ENCODE measurements at regions of chr13 and their contacts with region 1.

Region 1: DNA sequence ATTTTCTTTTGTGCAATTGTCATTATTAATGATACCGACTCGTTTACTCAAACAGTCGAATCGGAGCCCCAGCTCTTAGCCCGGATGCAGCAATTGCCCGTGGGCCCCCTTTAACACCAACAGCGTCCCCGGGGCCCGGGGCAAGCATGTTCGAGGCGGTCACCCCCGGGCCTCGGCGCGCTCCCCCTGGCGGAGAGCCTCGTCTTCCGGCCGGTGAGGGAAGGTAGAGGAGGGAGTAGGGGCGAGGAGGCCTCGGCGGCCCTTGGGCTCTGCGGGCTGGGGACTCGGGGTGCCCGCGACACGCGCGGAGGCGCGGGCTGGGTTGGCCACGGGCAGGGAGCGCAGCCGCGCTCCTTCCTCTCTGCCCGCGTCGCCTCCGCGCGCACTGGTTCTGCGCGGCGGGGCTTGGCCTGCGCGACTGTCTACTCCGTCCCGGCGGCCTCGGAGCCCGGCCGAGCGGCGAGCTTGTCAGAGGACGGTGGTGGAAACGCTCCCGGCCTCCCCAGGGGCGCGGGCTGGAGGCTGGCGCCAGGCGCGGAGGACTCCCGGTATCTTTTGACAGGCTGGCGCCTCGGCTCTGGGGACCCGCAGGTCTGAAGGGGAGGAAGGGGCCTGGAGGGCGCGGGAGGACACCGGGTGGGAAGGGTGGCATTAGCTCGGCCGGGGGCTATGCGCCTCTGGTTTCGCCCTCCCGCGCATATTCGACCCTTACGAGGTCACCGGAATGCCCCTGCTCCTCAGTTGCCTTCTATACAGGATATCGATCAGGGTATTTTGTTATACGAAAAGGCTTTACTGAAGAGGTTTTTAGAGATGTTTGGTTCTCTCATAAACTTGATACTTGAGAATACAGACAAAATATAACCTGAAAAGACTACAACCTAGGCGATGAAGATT is 1.5 kb downstream of the BIVM start:
- DNase-seq: peak; percentile 88 to 93 (median 93)
- H3K4me3 ChIP-seq: peak overlapping the region; percentile 67 to 97 (median 85)
- H3K27ac ChIP-seq: peak overlapping the region; percentile 61 to 85
- H3K4me1 ChIP-seq: peaks cover 12 to 47% (median 30%) of the 10 kb centered on the region in 4 experiments
- H3K27me3 ChIP-seq: no peaks in the 10 kb centered on the region

Region 2: GRCh38 chr13:102773441-102774215 is 26.8 kb before region 1 on chr13 and contains the start of gene TEX30:
- CTCF ChIA-PET with region 1: interaction called, 77 read pairs
- POLR2A ChIA-PET with region 1: interaction called, 15 read pairs
- DNase-seq: peak; percentile 82 to 90 (median 88)
- H3K4me3 ChIP-seq: peak within 1 kb of the TSS; percentile 81 to 96 (median 88)
- H3K27ac ChIP-seq: peak within 1 kb of the TSS; percentile 30 to 86
- H3K4me1 ChIP-seq: peaks cover 28 to 63% (median 48%) of the 10 kb centered on the region in 4 experiments
- H3K27me3 ChIP-seq: no peaks in the 10 kb centered on the region